ENCODE measurements at regions of chr7 and their contacts with region 1.

Region 1: GRCh38 chr7:155543011-155543876 is 3.1 kb downstream of the CNPY1 start:
- DNase-seq: peak; percentile 62

Region 2: GRCh38 chr7:155426543-155427410 is 116.5 kb before region 1 on chr7:
- intact Hi-C with region 1: no loop called
- DNase-seq: peak; percentile 63

Region 3: DNA sequence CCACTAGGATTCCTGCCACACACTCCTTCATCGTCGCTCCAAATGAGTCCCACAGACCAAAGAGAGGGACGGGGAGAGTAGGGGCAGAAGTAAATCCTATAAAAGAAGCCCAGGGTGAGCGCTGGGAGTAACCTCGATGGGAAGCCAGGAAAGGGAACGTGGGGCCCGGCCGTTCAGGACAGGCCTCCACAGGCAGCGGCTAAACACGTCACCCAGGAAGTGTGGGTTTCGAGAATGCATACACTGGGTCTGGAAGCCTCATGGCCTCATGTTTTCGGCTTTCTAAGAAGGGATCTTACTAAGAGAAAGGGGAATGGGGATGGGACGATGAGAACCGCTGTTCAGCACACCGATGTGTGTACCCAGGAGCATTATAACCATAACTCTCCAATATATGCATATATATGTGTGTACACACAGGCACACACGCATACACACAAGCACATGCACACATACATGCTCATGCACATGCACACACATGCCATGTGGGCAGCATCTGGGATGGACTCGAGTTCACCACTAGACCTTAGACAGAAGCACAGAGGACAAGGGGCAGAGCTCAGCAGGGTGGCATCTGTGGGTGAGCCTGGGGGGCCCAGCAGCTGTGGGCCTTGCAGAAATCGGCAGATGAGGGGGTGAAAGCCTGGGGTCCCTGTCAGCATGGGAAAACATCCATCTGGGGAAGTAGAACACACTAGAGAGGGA is 17.9 kb after region 1 on chr7:
- intact Hi-C with region 1: no loop called
- DNase-seq: peak; percentile 50

Region 4: DNA sequence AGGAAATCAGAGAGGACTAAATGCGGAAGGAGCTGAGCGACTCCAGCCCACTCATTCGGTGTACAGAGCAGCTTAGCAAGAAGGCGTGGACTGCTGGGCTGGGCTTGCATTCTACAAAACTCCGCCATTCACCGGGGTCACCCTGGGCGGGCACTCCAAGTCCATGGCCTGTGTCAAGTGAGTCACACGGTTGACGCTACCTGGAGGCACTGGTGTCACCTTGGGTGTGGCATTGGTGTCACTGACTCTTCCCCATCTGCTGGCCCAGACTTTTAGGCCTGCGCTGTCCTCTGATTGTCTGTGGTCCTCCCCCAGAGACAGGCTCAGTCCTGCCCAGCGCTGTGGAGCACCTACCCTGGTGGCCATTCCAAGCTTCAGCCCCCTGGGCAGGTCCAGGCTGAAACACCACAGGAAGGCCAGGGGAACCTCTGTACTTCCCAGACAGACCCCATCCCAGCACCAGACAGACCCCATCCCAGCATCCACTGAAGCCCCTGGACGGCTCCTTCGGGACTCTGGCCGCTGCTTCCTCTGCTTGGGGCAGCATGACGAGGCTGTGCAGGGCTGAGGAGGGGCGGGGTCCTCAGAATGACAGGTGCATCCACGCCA is 33.8 kb after region 1 on chr7:
- intact Hi-C with region 1: no loop called
- DNase-seq: peak; percentile 55

Region 5: DNA sequence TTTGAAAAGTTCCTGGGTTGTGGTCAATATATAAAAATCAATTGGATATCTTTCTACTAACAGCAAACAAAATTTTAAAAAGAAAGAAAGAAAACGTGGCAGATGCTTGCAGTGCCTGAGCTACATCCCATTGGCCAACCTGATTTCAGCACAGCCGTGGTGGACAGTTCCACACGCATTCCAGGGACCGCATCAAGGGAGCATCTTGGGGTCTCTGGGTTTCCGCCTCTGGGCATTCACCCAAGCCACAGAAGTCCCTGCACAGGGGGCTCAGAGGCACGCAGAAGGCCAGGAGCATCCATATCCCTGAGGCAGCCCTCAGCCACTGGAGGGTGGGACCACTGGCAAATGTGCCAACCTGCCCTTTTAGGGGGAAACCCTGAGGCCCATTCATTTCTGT is 842.9 kb after region 1 on chr7:
- intact Hi-C with region 1: loop called in 1 of 2 experiments (anchors 5 kb)
- DNase-seq: no peak